ENCODE measurements at regions of chr10 and their contacts with region 1.

Region 1: DNA sequence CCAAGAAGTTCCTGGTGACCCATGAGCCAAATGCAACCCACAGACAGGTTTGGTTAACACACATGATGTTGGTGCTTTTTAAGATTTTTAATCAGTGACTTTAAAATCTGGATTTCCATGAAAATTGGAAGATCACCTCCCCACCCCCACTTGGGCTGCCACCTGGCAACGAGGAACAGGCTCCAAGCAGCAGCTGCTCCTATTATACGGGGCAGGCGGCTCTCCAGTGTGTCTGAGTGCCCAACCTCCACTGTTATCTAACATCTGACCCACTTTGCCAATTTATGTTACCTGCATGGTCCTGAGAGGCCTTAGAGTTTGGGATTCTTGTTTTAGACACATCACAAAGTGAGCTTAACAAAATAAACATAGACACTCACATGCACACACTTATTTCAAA is 56.4 kb downstream of the SGMS1 start:
- DNase-seq: peak; percentile 74 to 81
- H3K4me3 ChIP-seq: no peak overlapping the region
- H3K27ac ChIP-seq: peak overlapping the region; percentile 51 to 60 (median 59)
- H3K4me1 ChIP-seq: peaks cover 29 to 34% of the 10 kb centered on the region in 2 donors
- H3K27me3 ChIP-seq: no peaks in the 10 kb centered on the region
- CTCF ChIP-seq: no peak
- POLR2A ChIP-seq: no peak

Region 2: GRCh38 chr10:50614444-50615137 is 47.2 kb after region 1 on chr10:
- intact Hi-C with region 1: loop called (anchors 5 kb)
- DNase-seq: peak; percentile 52 to 60
- H3K4me3 ChIP-seq: no peak overlapping the region
- H3K27ac ChIP-seq: peak overlapping the region; percentile 49 to 79 (median 78)
- H3K4me1 ChIP-seq: peaks cover 58 to 77% of the 10 kb centered on the region in 2 donors
- H3K27me3 ChIP-seq: no peaks in the 10 kb centered on the region
- CTCF ChIP-seq: peak in 5 of 6 experiments; percentile 38 to 61 (median 51)
- POLR2A ChIP-seq: no peak